H1 (cell line): ENCODE measurements at regions of chr4 and their contacts with region 1.

Region 1: DNA sequence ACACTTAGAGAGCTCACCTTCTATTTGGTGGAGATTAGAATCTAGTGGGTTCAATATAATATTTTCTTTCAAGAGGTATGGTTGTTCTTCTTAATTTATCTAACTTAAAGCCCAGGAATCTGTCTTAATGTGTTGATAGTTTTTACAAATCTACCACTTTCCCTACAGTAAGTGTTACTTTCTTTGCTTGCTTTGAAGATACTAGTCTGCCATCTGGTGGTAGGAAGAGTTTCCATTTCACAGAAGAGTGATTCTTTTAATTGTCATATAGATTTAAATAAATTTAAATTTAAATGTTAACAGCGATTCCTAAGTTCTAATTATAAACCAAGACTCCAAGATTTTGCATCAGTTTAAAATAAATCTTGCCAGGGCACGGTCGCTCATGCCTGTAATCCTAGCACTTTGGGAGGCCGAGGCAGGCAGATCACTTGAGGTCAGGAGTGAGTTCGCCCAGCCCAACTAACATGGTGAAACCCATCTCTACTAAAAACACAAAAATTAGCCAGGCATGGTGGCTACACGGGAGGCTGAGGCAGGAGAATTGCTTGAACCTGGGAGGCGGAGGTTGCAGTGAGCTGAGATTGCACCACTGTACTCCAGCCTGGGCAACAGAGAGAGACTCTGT is 43.5 kb downstream of the NUDT9 start:
- DNase-seq: no peak
- H3K4me3 ChIP-seq: no peak overlapping the region
- H3K27ac ChIP-seq: no peak overlapping the region
- H3K4me1 ChIP-seq: peaks cover 0 to 5% (median 0%) of the 10 kb centered on the region in 4 experiments; a peak in 1 of 7 replicates
- H3K27me3 ChIP-seq: no peaks in the 10 kb centered on the region
- CTCF ChIP-seq: peak in 2 of 3 experiments; percentile 38 to 41; a peak in 2 of 4 replicates
- EP300 ChIP-seq: no peak
- POLR2A ChIP-seq: no peak
- RAD21 ChIP-seq: peak; percentile 60 to 65

Region 2: GRCh38 chr4:86972997-86973396 is 492.9 kb before region 1 on chr4:
- CTCF ChIA-PET with region 1: no interaction called
- POLR2A ChIA-PET with region 1: no interaction called
- DNase-seq: no peak
- H3K4me3 ChIP-seq: no peak overlapping the region
- H3K27ac ChIP-seq: no peak overlapping the region
- H3K4me1 ChIP-seq: peaks cover 6 to 17% (median 12%) of the 10 kb centered on the region in 4 experiments
- H3K27me3 ChIP-seq: no peaks in the 10 kb centered on the region
- CTCF ChIP-seq: no peak
- EP300 ChIP-seq: no peak
- POLR2A ChIP-seq: no peak
- RAD21 ChIP-seq: no peak

Region 3: DNA sequence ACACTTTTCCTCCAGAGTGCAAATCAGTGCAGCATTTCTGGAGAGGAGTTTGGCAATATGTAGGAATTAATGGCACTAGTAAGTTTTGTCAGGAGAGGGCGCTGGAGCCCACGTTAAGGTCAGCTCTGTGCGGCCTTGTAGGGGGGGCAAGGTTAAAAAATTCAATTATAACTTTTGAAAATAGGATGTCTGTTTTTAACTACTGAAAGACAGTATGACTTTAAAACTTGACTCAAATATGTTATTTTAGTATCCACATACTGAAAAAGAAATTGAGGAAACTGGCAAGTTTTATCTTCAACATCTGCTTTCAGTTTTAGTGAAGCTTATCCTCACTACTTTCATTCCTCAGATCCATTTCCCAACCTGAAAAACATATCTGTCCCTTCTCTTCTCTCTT is 112.3 kb before region 1 on chr4:
- CTCF ChIA-PET with region 1: interaction called, 24 read pairs
- POLR2A ChIA-PET with region 1: no interaction called
- DNase-seq: peak; percentile 13 to 68
- H3K4me3 ChIP-seq: no peak overlapping the region
- H3K27ac ChIP-seq: no peak overlapping the region
- H3K4me1 ChIP-seq: no peaks in the 10 kb centered on the region; a peak in 2 of 7 replicates
- H3K27me3 ChIP-seq: no peaks in the 10 kb centered on the region
- CTCF ChIP-seq: peak; percentile 38 to 69 (median 69)
- EP300 ChIP-seq: no peak
- POLR2A ChIP-seq: no peak
- RAD21 ChIP-seq: peak; percentile 86 to 87

Region 4: GRCh38 chr4:87516683-87517082 is 50.8 kb after region 1 on chr4:
- CTCF ChIA-PET with region 1: no interaction called
- POLR2A ChIA-PET with region 1: no interaction called
- DNase-seq: no peak
- H3K4me3 ChIP-seq: no peak overlapping the region
- H3K27ac ChIP-seq: no peak overlapping the region
- H3K4me1 ChIP-seq: peaks cover 2 to 5% (median 4%) of the 10 kb centered on the region in 4 experiments; a peak in 5 of 7 replicates
- H3K27me3 ChIP-seq: no peaks in the 10 kb centered on the region; a peak in 2 of 7 replicates
- CTCF ChIP-seq: no peak
- EP300 ChIP-seq: no peak
- POLR2A ChIP-seq: no peak
- RAD21 ChIP-seq: no peak